CD8-positive, alpha-beta T cell (primary cell): ENCODE measurements at regions of chr1 and their contacts with region 1.

Region 1: DNA sequence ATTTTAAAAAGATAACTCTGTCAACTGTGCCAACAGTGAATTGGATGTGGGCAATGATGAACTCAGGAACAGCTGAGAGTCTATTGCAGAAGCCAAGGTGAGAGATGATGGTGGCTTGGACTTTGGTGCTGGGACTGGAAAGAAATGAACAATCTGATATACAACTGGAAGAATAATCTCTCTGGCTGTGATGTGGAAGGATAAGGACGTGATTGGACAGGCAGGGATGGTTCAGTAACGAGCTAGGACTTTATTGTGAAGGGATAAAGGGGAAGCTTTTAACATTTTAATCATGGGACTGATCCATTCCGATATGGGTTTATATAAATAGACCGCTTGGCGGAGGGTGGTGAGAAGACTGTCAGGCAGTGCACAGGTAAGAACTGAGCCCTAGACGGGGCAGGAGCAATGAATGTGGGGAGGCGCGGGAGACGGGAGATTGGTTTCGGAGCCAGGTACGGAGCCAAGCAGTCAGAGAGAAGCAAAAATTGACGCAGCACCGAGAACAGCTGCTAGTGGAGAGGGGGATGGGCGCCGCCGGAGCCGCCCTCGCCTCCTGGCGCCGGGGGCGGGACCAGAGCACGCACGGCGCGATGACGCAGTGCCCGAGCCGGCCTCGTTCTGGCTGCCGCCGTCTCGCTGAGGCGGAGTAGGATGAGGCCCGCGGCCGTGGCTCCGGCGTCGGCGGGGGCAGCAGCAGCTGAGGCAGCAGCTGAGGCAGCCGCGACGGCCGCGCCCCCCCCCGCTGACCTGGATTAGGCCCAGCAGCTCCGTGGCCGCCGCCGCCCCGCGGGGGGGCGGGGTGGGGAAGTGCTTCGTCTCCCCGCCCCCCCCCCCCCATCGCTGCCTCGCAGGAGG is at the start of gene RNF11:
- DNase-seq: peak; percentile 86 to 97 (median 91)
- ATAC-seq: peak; percentile 92
- H3K4me3 ChIP-seq: peak within 1 kb of the TSS; percentile 79 to 90
- H3K4me3 Mint-ChIP-seq: peak within 1 kb of the TSS; percentile 98
- H3K27ac ChIP-seq: peak within 1 kb of the TSS; percentile 80 to 92
- H3K27ac Mint-ChIP-seq: peak within 1 kb of the TSS; percentile 99
- H3K4me1 ChIP-seq: peaks cover 37% of the 10 kb centered on the region
- H3K4me1 Mint-ChIP-seq: peaks cover 33% of the 10 kb centered on the region
- H3K27me3 ChIP-seq: no peaks in the 10 kb centered on the region
- H3K27me3 Mint-ChIP-seq: no peaks in the 10 kb centered on the region
- CTCF ChIP-seq: no peak
- total RNA-seq, gene RNF11: 95.9 to 103 TPM

Region 2: GRCh38 chr1:51270751-51271150 is 34.8 kb after region 1 on chr1:
- CTCF ChIA-PET with region 1: no interaction called
- POLR2A ChIA-PET with region 1: interaction called, 3 read pairs
- intact Hi-C with region 1: loop called in 1 of 2 experiments (anchors 5 kb)
- DNase-seq: no peak
- ATAC-seq: no peak
- H3K4me3 ChIP-seq: no peak overlapping the region
- H3K4me3 Mint-ChIP-seq: no peak overlapping the region
- H3K27ac ChIP-seq: no peak overlapping the region
- H3K27ac Mint-ChIP-seq: no peak overlapping the region
- H3K4me1 ChIP-seq: peaks cover 13% of the 10 kb centered on the region
- H3K4me1 Mint-ChIP-seq: peaks cover 24% of the 10 kb centered on the region
- H3K27me3 ChIP-seq: no peaks in the 10 kb centered on the region
- H3K27me3 Mint-ChIP-seq: no peaks in the 10 kb centered on the region
- CTCF ChIP-seq: no peak

Region 3: DNA sequence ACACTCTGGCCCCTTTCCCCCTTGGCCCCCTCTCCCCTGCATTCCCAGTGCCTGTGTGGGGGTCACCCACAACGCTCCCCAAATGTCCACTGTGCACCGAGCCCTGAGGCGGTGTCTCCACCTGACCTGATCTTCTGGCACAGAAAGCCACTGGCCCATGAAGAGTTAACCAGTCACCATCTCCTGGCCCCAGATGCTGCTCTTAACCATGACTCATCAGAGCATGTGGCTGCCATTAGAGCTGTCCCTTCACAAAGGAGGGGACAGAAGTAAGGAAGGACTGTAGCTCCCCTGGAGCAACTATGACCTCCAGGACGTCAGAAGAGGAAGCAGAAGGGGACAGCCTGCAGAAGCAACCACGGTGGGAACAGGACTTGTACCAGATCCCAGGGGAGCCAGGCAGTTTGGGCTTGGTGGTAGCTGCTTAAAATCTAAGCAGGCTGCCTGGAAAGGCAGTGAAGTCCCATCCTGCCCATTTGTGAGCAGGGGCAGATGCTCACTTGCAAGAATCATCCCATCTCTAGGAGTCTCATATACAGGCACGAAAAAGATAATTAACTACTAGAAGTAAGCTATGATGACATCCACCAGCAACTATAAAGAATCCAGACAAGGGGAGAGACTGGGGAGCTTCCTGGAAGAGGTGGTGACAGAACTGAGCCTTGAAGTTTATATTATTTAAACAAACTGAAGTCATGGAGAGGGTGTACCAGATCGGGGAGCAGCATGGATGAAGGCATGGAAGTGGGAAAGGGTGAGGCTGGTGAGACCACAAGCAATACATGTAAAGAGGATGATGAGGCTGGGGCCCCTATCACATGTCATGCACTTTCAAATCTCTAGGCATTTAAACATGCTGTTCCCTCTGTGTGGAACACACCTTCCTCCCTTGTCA is 95.6 kb after region 1 on chr1:
- CTCF ChIA-PET with region 1: no interaction called
- POLR2A ChIA-PET with region 1: no interaction called
- intact Hi-C with region 1: no loop called
- DNase-seq: no peak
- ATAC-seq: no peak
- H3K4me3 ChIP-seq: no peak overlapping the region
- H3K4me3 Mint-ChIP-seq: peak overlapping the region; percentile 78
- H3K27ac ChIP-seq: no peak overlapping the region
- H3K27ac Mint-ChIP-seq: no peak overlapping the region
- H3K4me1 ChIP-seq: no peaks in the 10 kb centered on the region
- H3K4me1 Mint-ChIP-seq: peaks cover 8% of the 10 kb centered on the region
- H3K27me3 ChIP-seq: peaks cover 6 to 15% of the 10 kb centered on the region in 2 experiments
- H3K27me3 Mint-ChIP-seq: peaks cover 37% of the 10 kb centered on the region
- CTCF ChIP-seq: no peak

Region 4: DNA sequence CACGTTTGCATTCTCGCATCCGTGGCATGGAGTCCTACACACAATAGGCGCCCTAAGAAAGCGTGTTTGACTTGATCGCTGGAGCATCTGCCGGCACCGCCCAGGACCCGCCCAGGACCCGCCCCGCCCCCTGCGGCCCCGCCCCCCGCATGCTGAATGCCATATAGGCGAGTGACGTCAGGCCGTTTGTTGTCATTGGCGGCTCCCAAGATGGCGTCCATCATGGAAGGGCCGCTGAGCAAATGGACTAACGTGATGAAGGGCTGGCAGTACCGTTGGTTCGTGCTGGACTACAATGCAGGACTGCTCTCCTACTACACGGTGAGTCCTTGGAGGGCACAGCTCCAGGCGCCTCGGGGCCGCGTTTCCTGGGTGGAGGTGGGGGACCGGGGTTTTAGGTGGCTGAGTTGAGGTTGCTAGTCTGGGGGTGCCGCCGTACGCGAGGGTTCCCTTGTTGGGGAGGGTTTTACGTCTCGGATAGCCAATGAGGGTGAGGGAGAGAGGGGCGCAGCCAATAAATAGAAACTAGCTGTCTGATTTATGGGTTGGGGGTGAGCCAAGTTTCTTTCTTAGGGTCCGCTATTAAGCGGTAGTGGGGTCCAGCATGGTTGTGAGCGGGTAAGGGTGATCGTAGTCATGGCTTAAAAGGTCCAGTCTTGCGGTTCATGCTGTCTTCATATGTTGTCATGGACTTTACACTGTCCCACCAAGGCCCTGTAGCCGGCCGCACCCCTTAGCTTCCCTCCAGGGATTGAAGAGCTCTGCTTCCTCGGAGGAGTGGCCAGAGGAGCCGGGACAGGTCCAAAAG is 381.2 kb after region 1 on chr1 and contains the start of gene OSBPL9:
- CTCF ChIA-PET with region 1: no interaction called
- POLR2A ChIA-PET with region 1: no interaction called
- intact Hi-C with region 1: loop called (anchors 2 to 5 kb)
- DNase-seq: peak; percentile 78 to 94 (median 87)
- ATAC-seq: peak; percentile 93
- H3K4me3 ChIP-seq: peak within 1 kb of the TSS; percentile 90 to 98
- H3K4me3 Mint-ChIP-seq: peak within 1 kb of the TSS; percentile 100
- H3K27ac ChIP-seq: peak within 1 kb of the TSS; percentile 84
- H3K27ac Mint-ChIP-seq: peak within 1 kb of the TSS; percentile 99
- H3K4me1 ChIP-seq: peaks cover 23% of the 10 kb centered on the region
- H3K4me1 Mint-ChIP-seq: peaks cover 42% of the 10 kb centered on the region
- H3K27me3 ChIP-seq: no peaks in the 10 kb centered on the region
- H3K27me3 Mint-ChIP-seq: peaks cover under 1% of the 10 kb centered on the region
- CTCF ChIP-seq: no peak
- total RNA-seq, gene OSBPL9: 48.5 to 49.2 TPM

Region 5: DNA sequence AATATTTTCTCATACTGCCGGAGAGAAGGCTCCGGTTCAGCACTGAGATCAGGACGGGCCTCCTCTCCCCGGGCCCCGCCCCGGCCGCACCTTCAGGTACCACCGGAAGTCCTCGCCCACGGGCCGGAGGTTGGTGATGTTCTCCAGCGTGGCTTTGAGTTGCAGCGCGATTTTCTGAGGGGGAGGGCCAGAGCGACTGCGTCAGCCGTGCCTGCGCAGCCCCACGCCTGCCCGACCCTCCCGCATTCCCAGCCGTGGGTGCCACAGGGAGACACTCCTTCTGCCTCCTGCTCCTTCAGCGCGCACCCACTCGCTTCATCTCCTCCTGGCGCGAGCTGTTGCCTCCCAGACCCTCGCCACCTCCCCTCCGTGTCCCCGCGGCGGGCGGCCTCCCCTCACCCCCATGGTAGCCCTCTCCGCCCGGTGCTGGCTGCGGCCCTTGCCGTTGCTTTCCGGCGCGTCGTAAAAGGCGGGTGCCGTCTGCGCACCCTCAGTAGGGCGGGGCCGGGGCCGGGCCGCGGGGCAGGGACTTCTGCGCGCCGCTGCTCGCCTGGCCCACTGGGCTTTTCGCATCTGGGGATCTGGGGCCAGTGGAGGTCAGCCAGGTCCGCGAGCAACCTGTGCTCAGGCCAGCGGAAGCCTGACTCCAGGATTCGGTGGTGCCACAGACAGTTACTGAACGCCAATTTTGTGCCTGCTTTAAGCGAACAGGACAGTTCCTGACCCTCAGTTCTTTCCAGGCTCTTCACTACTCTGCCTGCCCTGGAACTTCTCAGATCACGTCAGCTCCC is 1984.5 kb after region 1 on chr1 and contains the start of gene CZIB:
- CTCF ChIA-PET with region 1: no interaction called
- POLR2A ChIA-PET with region 1: no interaction called
- intact Hi-C with region 1: loop called (anchors 5 to 10 kb)
- DNase-seq: peak; percentile 83 to 95 (median 92)
- ATAC-seq: peak; percentile 92
- H3K4me3 ChIP-seq: peak within 1 kb of the TSS; percentile 80 to 92
- H3K4me3 Mint-ChIP-seq: peak within 1 kb of the TSS; percentile 94
- H3K27ac ChIP-seq: peak within 1 kb of the TSS; percentile 94
- H3K27ac Mint-ChIP-seq: peak within 1 kb of the TSS; percentile 98
- H3K4me1 ChIP-seq: peaks cover 16% of the 10 kb centered on the region
- H3K4me1 Mint-ChIP-seq: peaks cover 18% of the 10 kb centered on the region
- H3K27me3 ChIP-seq: no peaks in the 10 kb centered on the region
- H3K27me3 Mint-ChIP-seq: no peaks in the 10 kb centered on the region
- CTCF ChIP-seq: no peak
- total RNA-seq, gene CZIB: 26.7 to 27.4 TPM